Caco-2 (cell line): ENCODE measurements at regions of chr14 and their contacts with region 1.

Region 1: GRCh38 chr14:72904840-72905561 is 11.1 kb upstream of the DPF3 start:
- DNase-seq: peak; percentile 59 to 73
- H3K4me3 ChIP-seq: no peak overlapping the region
- H3K4me3 Mint-ChIP-seq: no peak overlapping the region
- H3K27ac Mint-ChIP-seq: no peak overlapping the region
- H3K4me1 ChIP-seq: peaks cover 7% of the 10 kb centered on the region; the same call in 1 of the 2 replicates
- H3K4me1 Mint-ChIP-seq: peaks cover 18% of the 10 kb centered on the region
- H3K27me3 ChIP-seq: no peaks in the 10 kb centered on the region
- H3K27me3 Mint-ChIP-seq: peaks cover 12% of the 10 kb centered on the region
- CTCF ChIP-seq: peak; percentile 90 to 91

Region 2: GRCh38 chr14:72516936-72517700 is 387.9 kb before region 1 on chr14:
- CTCF ChIA-PET with region 1: interaction called, 33 read pairs
- POLR2A ChIA-PET with region 1: no interaction called
- intact Hi-C with region 1: loop called (anchors 1 kb)
- DNase-seq: peak; percentile 62 to 68
- H3K4me3 ChIP-seq: no peak overlapping the region
- H3K4me3 Mint-ChIP-seq: no peak overlapping the region
- H3K27ac Mint-ChIP-seq: no peak overlapping the region
- H3K4me1 ChIP-seq: no peaks in the 10 kb centered on the region
- H3K4me1 Mint-ChIP-seq: no peaks in the 10 kb centered on the region
- H3K27me3 ChIP-seq: no peaks in the 10 kb centered on the region
- H3K27me3 Mint-ChIP-seq: peaks cover 10% of the 10 kb centered on the region
- CTCF ChIP-seq: peak; percentile 74 to 76

Region 3: DNA sequence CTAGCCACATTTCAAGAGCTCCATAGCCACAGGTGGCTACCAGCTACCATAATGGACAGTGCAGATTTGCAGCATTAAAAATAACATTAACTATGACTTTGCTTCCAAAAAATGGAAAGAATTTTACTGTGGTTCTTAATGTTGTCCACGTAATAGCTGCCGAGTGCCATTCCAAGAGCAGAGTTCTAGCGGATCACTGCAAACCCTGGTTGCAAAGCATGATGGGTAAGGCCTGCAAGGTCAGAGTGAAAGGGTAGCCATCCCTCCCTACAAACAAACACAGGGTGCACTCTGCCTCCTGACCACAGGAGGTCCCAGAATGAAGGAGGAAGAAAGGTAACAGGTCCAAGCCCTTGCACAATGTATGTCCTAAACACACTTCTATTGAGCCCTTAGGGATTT is 168.7 kb before region 1 on chr14:
- CTCF ChIA-PET with region 1: no interaction called
- POLR2A ChIA-PET with region 1: no interaction called
- intact Hi-C with region 1: loop called (anchors 1 kb)
- DNase-seq: peak in 1 of 2 experiments; percentile 29
- H3K4me3 ChIP-seq: no peak overlapping the region
- H3K4me3 Mint-ChIP-seq: no peak overlapping the region
- H3K27ac Mint-ChIP-seq: no peak overlapping the region
- H3K4me1 ChIP-seq: no peaks in the 10 kb centered on the region
- H3K4me1 Mint-ChIP-seq: no peaks in the 10 kb centered on the region
- H3K27me3 ChIP-seq: 0 out of 2 replicates have a peak, but pooled peaks cover 1% of the 10 kb centered on the region
- H3K27me3 Mint-ChIP-seq: peaks cover 20% of the 10 kb centered on the region
- CTCF ChIP-seq: peak in 1 of 2 experiments; percentile 25

Region 4: GRCh38 chr14:72758420-72758819 is 146.6 kb before region 1 on chr14:
- CTCF ChIA-PET with region 1: no interaction called
- POLR2A ChIA-PET with region 1: no interaction called
- intact Hi-C with region 1: loop called (anchors 1 kb)
- DNase-seq: no peak
- H3K4me3 ChIP-seq: no peak overlapping the region
- H3K4me3 Mint-ChIP-seq: no peak overlapping the region
- H3K27ac Mint-ChIP-seq: no peak overlapping the region
- H3K4me1 ChIP-seq: no peaks in the 10 kb centered on the region
- H3K4me1 Mint-ChIP-seq: no peaks in the 10 kb centered on the region
- H3K27me3 ChIP-seq: no peaks in the 10 kb centered on the region
- H3K27me3 Mint-ChIP-seq: peaks cover 6% of the 10 kb centered on the region
- CTCF ChIP-seq: peak in 1 of 2 experiments; percentile 14

Region 5: DNA sequence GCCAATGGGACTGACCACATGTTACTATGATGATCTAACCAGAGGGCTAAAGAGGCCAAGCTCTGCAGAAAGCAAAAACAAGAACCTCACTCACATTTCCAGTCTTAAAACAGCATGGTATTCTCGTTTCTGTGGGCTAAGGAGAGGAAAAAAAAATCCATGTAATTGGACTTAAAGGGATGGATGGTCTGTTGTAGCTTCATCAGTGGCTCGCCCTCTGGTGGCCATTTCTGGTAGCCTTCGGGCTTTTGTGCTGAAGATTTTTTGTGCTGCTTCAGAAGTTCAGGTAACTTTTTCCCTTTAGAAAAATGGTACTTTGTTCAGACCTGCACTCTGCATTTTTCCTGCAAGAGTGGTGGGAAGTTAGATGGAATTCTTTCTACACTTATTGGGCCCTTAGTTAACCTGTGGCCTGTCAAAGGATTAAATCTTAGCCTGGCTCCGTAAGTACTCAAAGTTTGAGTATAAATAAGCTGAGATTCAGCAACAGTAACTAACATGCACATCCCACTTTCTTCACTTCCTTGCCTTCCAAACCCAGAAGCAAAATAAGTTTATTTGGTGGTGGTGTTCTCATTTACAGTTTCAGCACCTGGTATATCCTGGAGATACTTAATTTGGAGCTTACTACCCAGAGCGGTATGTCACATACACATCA is 43.6 kb after region 1 on chr14:
- CTCF ChIA-PET with region 1: interaction called, 3 read pairs
- POLR2A ChIA-PET with region 1: no interaction called
- intact Hi-C with region 1: loop called (anchors 2 kb)
- DNase-seq: peak; percentile 57 to 73
- H3K4me3 ChIP-seq: no peak overlapping the region
- H3K4me3 Mint-ChIP-seq: no peak overlapping the region
- H3K27ac Mint-ChIP-seq: no peak overlapping the region
- H3K4me1 ChIP-seq: no peaks in the 10 kb centered on the region
- H3K4me1 Mint-ChIP-seq: no peaks in the 10 kb centered on the region
- H3K27me3 ChIP-seq: no peaks in the 10 kb centered on the region
- H3K27me3 Mint-ChIP-seq: no peaks in the 10 kb centered on the region
- CTCF ChIP-seq: peak; percentile 86 to 90